HCT116 (cell line): ENCODE measurements at regions of chr2 and their contacts with region 1.

Region 1: DNA sequence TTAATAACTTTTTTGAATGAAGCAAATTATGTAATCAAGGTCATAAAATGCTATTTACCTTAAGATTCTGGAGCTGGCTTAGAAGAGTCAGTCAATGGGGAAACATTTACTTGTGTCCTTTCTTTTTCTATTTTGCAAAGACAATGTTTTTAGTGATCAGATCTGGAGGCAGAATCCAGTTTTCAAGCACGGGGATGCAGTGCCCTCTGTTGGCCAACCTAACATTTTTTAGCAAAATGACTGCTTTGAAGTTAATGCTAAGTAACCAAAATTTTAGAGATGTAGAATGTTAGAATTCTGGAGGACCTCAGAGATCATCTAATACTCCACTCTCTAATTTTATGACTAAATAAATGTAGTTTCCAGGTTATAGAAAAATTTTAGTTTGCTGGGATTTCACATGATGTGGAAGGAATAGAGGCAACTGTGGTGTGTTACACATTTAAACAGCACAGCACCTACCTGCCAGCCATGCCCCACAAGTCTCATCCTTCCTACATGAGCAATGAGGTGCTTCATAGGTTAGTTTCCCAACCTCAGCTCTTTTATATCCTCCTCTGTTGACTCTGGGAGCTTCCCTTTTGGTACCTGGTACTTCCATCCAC is 23.6 kb upstream of the SLC9A4 start:
- DNase-seq: peak; percentile 13
- ATAC-seq: peak; percentile 57
- H3K4me3 ChIP-seq: no peak overlapping the region
- H3K27ac ChIP-seq: no peak overlapping the region
- H3K4me1 ChIP-seq: no peaks in the 10 kb centered on the region
- H3K27me3 ChIP-seq: no peaks in the 10 kb centered on the region
- CTCF ChIP-seq: peak; percentile 62 to 74 (median 65)
- POLR2A ChIP-seq: no peak
- RAD21 ChIP-seq: peak; percentile 75

Region 2: GRCh38 chr2:101883863-101884262 is 565.6 kb before region 1 on chr2:
- CTCF ChIA-PET with region 1: interaction called, 3 read pairs
- POLR2A ChIA-PET with region 1: no interaction called
- RAD21 ChIA-PET with region 1: no interaction called
- intact Hi-C with region 1: loop called (anchors 5 kb)
- DNase-seq: peak; percentile 8
- ATAC-seq: peak; percentile 78
- H3K4me3 ChIP-seq: no peak overlapping the region
- H3K27ac ChIP-seq: no peak overlapping the region
- H3K4me1 ChIP-seq: no peaks in the 10 kb centered on the region
- H3K27me3 ChIP-seq: no peaks in the 10 kb centered on the region
- CTCF ChIP-seq: peak; percentile 41 to 67 (median 61); a peak in 5 of 6 replicates
- POLR2A ChIP-seq: no peak
- RAD21 ChIP-seq: peak; percentile 47

Region 3: DNA sequence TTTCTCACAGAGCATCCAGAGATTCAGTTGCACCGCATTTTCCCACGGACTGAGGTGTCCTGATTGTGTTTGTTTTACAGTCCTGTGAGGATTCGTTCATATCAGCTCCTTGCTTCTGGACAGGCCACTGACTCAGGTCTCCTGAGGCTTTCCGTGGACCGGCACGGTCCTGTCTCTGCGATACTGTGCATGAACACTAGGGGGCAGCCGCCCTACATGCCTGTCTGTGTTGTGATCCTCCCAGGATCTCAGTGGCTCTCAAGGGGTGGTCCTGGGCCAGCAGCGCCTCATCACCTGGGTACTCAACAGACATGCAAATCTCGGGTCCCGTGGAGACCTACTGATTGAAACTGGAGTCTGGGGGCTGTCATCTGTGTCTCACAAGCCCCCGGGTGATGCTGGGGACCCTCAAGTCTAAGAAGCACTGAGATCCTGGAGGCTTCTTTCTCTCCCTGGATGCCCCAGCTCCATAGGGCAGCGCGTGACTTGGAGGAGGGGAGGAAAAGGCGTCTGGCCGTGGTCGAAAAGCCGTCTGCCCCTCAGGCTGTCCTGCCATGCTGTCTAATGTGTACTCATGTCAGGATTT is 428.8 kb before region 1 on chr2:
- CTCF ChIA-PET with region 1: no interaction called
- POLR2A ChIA-PET with region 1: no interaction called
- RAD21 ChIA-PET with region 1: no interaction called
- intact Hi-C with region 1: loop called (anchors 1 kb)
- DNase-seq: peak; percentile 61
- ATAC-seq: peak; percentile 99
- H3K4me3 ChIP-seq: no peak overlapping the region
- H3K27ac ChIP-seq: no peak overlapping the region
- H3K4me1 ChIP-seq: no peaks in the 10 kb centered on the region
- H3K27me3 ChIP-seq: no peaks in the 10 kb centered on the region
- CTCF ChIP-seq: peak; percentile 89 to 98 (median 97)
- POLR2A ChIP-seq: no peak
- RAD21 ChIP-seq: peak; percentile 97

Region 4: DNA sequence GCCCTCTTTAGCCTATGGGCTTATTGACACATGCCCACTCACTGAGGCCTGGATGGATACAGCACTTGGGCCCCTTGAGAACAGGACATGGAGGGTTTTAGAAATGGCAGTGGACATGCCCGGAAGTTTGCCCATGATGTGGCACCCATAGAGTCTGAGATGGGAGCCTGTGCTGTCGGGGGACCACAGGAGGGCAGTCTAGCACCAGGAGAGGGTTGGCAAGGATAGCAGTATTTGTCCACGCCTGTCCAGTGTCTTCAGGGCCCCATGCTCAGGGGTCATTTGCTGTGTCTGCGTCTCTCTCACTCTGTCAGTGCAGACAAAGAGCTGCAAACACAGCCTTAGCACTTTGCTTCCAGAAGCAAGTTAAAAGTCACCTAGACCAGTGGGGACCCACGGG is 214.0 kb before region 1 on chr2:
- CTCF ChIA-PET with region 1: interaction called, 6 read pairs
- POLR2A ChIA-PET with region 1: no interaction called
- RAD21 ChIA-PET with region 1: no interaction called
- intact Hi-C with region 1: loop called (anchors 2 kb)
- DNase-seq: no peak
- ATAC-seq: peak; percentile 85
- H3K4me3 ChIP-seq: no peak overlapping the region
- H3K27ac ChIP-seq: no peak overlapping the region
- H3K4me1 ChIP-seq: peaks cover 0 to 9% of the 10 kb centered on the region in 2 experiments; a peak in 3 of 4 replicates
- H3K27me3 ChIP-seq: no peaks in the 10 kb centered on the region
- CTCF ChIP-seq: peak; percentile 48 to 59 (median 55); a peak in 5 of 6 replicates
- POLR2A ChIP-seq: no peak
- RAD21 ChIP-seq: peak; percentile 67